ENCODE measurements at regions of chr6 and their contacts with region 1.

Region 1: DNA sequence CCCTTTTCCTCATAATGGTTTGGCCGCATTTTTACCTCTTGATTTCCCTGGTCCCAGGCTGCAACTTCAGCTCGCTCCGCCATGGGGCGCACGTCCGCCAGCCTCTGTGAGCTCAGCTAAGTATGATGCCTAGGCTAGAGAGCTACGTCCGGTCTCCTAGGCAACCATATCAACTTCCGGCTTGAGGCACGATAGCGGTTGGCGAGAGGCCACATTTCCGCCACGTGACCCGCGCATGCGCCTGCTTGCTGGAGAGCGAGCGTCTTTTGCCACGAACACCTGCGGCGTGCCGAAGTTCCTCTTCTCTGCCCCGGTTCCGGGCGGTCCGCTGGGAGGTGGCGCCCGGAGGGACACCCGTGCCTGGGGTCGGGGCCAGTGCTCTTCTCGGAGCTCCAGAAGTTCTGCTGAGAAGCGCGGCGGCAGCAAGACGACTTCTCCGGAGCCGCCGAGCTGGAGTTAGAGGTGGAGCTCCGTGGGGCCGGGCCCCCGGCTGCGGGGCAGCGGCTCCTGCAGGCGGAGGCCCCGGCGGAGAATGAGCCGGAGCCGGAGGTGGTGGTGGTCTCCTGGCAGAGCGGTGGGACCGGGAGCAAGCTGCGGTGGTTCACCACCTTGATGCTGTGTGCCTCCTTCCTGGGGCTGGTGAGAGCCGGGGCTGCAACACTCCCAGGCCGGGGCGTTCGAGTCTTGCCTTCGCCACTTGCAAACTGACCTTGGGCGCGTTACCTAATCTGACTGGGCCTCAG is 172.0 kb downstream of the SLC16A10 start:
- DNase-seq: peak; percentile 98 to 99 (median 99)
- ATAC-seq: peak; percentile 98 to 99 (median 99)
- H3K4me3 ChIP-seq: peak overlapping the region; percentile 50 to 94 (median 68)
- H3K27ac ChIP-seq: peak overlapping the region; percentile 33 to 94 (median 82)
- H3K4me1 ChIP-seq: peaks cover 0 to 22% (median 13%) of the 10 kb centered on the region in 12 donors
- H3K27me3 ChIP-seq: peaks cover 0 to 9% (median 0%) of the 10 kb centered on the region in 9 donors
- CTCF ChIP-seq: peak; percentile 90 to 99 (median 95)
- POLR2A ChIP-seq: peak in 1 of 2 donors; percentile 61

Region 2: DNA sequence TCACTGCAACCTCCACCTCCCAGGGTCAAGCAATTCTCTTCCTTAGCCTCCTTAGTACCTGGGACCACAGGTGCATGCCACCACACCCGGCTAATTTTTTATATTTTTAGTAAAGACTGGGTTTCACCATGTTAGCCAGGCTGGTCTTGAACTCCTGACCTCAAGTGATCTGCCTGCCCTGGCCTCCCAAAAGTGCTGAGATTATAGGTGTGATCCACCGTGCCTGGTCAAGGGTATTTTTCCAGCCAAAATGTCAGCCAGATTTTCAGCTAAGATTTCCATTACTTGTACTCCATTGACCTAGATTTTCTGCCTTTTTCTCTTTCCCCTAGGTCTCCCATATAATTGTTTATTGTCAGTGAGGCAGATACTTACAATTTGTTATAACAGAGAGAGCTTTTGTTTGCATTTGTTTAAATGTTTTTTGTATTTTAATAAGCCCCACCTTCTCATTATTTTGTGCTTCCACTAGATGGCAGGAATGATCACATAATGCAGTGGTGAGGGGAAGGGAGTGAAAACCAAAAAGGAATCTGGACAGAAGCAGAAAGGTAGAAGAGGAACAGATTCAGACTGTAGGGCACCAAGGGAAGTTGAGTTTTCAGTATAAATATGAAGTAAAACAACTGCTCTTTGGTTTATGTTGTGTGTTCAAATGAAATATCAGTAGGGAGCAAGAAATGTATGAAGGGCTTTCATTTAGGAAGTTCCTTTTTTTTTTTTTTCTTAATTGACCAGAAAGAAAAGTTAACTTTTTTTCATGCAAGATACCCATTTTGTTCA is 247.7 kb before region 1 on chr6:
- intact Hi-C with region 1: loop called in 1 of 10 experiments (anchors 5 kb)
- DNase-seq: no peak
- ATAC-seq: peak in 3 of 4 donors; percentile 59 to 68 (median 65)
- H3K4me3 ChIP-seq: no peak overlapping the region
- H3K27ac ChIP-seq: no peak overlapping the region
- H3K4me1 ChIP-seq: peaks cover 0 to 7% (median 0%) of the 10 kb centered on the region in 12 donors
- H3K27me3 ChIP-seq: no peaks in the 10 kb centered on the region
- CTCF ChIP-seq: peak; percentile 23 to 70 (median 52)
- POLR2A ChIP-seq: no peak

Region 3: DNA sequence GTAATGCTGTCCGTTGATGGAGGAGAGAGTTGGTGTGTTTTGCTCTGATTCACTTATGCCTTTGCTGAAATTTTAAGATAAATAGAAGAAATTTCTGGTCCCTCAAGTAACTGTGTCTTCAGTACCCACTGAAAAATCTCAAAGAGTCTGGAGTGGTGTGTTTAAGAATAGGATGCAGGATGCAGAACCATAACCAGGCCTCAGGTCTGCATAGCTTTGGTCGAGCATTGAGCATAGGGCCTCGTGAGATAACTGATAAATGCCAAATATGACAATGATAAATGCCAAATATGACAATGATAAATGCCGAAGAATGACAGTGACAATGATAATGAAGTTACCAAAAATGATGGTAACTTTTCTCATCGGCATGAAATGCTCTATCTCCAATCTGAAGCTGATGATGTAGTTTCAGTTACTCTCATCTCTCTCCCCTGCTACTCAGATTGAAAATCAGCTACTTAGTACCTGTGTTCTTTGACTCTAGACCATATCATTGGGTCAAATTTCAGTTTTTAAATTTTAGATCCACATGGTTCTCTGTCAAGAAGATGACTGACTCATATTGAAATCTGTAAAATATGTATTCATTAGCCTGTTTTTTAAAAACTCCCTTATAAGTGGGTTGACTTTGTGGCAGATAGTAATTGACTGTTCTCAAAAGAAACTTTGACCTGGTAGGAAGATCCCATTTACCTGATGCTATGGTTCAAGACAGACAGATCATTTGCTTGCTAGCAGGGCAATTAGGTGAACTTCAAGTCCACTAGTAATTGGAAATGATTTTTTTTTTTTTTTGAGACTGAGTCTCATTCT is 75.3 kb before region 1 on chr6:
- intact Hi-C with region 1: no loop called
- DNase-seq: no peak
- ATAC-seq: no peak
- H3K4me3 ChIP-seq: no peak overlapping the region
- H3K27ac ChIP-seq: no peak overlapping the region
- H3K4me1 ChIP-seq: peaks cover 0 to 7% (median 0%) of the 10 kb centered on the region in 12 donors
- H3K27me3 ChIP-seq: no peaks in the 10 kb centered on the region
- CTCF ChIP-seq: no peak
- POLR2A ChIP-seq: no peak